Right ventricle myocardium inferior (tissue), 1 donor: ENCODE measurements at regions of chr2 and their contacts with region 1.

Region 1: GRCh38 chr2:158179660-158180059 is 78.0 kb downstream of the UPP2 start:
- DNase-seq: no peak
- ATAC-seq: no peak

Region 2: GRCh38 chr2:158034199-158034866 is 145.3 kb before region 1 on chr2:
- intact Hi-C with region 1: loop called (anchors 10 kb)
- DNase-seq: no peak
- ATAC-seq: peak; percentile 59

Region 3: DNA sequence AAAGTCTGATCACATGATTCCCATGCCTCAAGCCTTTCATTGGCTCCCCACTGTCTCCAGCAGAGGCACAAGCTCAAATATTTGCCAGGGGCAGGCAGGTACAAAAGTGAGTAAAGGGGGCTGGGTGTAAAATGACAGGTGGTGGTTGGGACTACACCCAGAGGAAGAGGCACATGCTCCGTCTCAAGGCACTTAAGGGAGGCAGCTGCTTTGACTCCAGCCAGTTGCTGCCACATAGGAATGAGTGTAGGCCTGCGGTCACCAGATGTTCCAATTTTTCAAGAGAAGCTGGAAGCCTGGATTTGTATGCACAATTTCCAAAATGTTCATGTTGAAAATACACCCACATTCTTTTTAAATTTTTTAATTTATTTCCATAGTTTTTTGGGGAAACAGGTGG is 86.5 kb after region 1 on chr2:
- intact Hi-C with region 1: no loop called
- DNase-seq: no peak
- ATAC-seq: no peak

Region 4: DNA sequence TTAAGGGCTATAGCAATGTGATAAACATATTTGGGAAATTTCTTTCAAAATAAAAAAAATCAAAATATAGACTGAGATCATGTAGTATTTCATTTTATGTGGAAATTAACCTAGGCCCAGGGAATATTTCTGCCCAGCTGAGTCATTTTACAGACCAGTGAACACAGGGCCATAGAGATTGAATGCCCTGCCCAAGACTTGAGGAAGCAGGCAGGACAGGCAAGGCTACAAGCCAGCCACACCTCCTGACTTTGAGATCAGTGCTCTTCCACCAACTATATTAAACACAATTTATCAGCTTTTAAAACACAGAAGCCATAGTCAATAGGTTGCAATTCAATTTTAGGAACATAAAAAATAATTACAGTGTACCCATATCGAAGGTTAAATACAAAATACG is 264.0 kb after region 1 on chr2:
- intact Hi-C with region 1: no loop called
- DNase-seq: no peak
- ATAC-seq: no peak

Region 5: GRCh38 chr2:158753641-158754611 is 574.3 kb after region 1 on chr2:
- intact Hi-C with region 1: loop called (anchors 2 kb)
- DNase-seq: no peak
- ATAC-seq: peak; percentile 85